ENCODE measurements at regions of chr2 and their contacts with region 1.

Region 1: GRCh38 chr2:73071360-73072133 is at the start of gene SFXN5:
- DNase-seq: peak; percentile 97
- ATAC-seq: peak; percentile 96
- H3K4me3 Mint-ChIP-seq: peak within 1 kb of the TSS; percentile 82
- H3K27ac Mint-ChIP-seq: peak within 1 kb of the TSS; percentile 90
- H3K4me1 Mint-ChIP-seq: peaks cover 17% of the 10 kb centered on the region
- H3K27me3 Mint-ChIP-seq: no peaks in the 10 kb centered on the region
- total RNA-seq, gene SFXN5: 4.5 to 6.2 TPM

Region 2: DNA sequence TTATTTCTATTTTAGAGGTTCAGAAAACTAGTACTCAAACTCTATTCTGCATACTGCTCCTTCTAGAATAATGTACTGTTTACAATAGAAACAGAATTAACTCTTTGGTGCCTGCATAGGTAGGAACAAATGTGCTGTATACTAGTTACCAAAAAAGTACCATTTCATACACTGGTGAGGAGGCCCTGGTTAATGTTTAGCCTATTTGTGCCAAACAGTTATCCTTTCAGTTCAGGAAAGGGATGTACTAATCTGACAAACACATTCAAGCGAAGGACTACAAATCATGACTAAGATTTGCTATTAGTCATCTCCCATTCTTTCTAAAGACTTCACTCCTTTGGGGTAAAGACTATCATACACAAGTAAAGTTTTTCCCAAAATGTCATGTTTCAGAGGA is 293.1 kb before region 1 on chr2:
- CTCF ChIA-PET with region 1: no interaction called
- POLR2A ChIA-PET with region 1: no interaction called
- intact Hi-C with region 1: loop called in 1 of 2 experiments (anchors 5 kb)
- DNase-seq: no peak
- ATAC-seq: peak; percentile 70
- H3K4me3 Mint-ChIP-seq: no peak overlapping the region
- H3K27ac Mint-ChIP-seq: no peak overlapping the region
- H3K4me1 Mint-ChIP-seq: peaks cover 3% of the 10 kb centered on the region
- H3K27me3 Mint-ChIP-seq: no peaks in the 10 kb centered on the region

Region 3: DNA sequence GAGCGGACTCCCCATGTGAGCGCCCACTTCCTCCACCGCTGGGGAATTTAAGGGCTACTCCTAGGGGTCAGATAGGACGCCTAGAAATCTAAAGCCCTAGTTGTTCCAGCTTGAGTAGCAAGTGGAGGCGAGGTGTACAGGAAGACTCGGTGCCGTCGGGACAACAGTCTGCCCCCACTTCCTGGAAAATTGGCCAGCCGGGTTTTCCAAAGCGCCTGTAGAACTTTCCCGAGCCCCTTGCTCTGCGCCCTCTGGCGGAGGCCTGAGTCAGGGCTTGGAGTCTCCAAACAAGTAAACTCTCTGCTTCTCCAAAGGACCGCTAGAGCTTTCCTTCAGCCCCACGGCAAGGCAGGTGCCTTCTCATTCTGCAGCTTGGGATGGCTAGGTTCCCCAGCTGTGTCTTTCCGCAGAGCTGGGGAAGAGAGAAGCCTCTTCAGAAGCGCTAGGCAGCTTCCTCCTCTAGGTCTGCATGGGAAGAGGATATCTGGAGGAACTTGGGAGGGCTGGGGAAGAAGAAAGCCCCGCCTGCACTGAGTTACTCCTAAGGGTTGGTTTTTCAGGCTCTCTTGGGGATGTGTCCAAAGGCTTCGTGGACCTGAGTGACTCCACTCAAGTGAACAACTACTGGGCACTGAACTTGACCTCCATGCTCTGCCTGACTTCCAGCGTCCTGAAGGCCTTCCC is 183.7 kb before region 1 on chr2:
- CTCF ChIA-PET with region 1: interaction called, 3 read pairs
- POLR2A ChIA-PET with region 1: no interaction called
- intact Hi-C with region 1: loop called (anchors 1 to 5 kb)
- DNase-seq: peak; percentile 78
- ATAC-seq: peak; percentile 51
- H3K4me3 Mint-ChIP-seq: peak overlapping the region; percentile 70
- H3K27ac Mint-ChIP-seq: no peak overlapping the region
- H3K4me1 Mint-ChIP-seq: peaks cover 10% of the 10 kb centered on the region
- H3K27me3 Mint-ChIP-seq: peaks cover 53% of the 10 kb centered on the region

Region 4: DNA sequence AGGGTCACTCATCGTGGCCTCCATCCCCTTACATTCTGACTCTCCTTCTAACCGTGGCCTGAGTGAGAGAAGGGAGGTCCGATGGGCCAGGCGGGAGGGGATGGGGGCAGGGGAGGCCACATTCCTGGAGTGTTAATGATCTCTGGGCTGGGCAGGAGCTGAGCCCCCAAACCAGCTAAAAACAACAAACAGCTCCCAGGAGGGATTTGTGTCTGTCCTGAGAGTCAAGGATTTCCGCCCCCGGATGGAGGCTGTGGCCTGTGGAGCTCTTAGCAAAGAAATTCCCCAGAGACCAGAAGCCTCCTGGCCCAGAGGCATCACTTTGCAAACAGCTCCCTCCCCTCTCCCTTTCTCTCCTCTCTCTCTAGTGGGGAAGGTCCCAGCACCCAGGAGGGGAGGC is 130.8 kb before region 1 on chr2:
- CTCF ChIA-PET with region 1: no interaction called
- POLR2A ChIA-PET with region 1: no interaction called
- intact Hi-C with region 1: no loop called
- DNase-seq: no peak
- ATAC-seq: no peak
- H3K4me3 Mint-ChIP-seq: no peak overlapping the region
- H3K27ac Mint-ChIP-seq: no peak overlapping the region
- H3K4me1 Mint-ChIP-seq: no peaks in the 10 kb centered on the region
- H3K27me3 Mint-ChIP-seq: no peaks in the 10 kb centered on the region

Region 5: GRCh38 chr2:73112913-73113633 is 41.5 kb after region 1 on chr2 and contains the start of gene RAB11FIP5:
- CTCF ChIA-PET with region 1: interaction called, 3 read pairs
- POLR2A ChIA-PET with region 1: no interaction called
- intact Hi-C with region 1: loop called in 1 of 2 experiments (anchors 1 kb)
- DNase-seq: peak; percentile 87
- ATAC-seq: peak; percentile 84
- H3K4me3 Mint-ChIP-seq: peak within 1 kb of the TSS; percentile 79
- H3K27ac Mint-ChIP-seq: peak within 1 kb of the TSS; percentile 40
- H3K4me1 Mint-ChIP-seq: peaks cover 23% of the 10 kb centered on the region
- H3K27me3 Mint-ChIP-seq: peaks cover 2% of the 10 kb centered on the region
- total RNA-seq, gene RAB11FIP5: 16.4 to 16.5 TPM

Region 6: GRCh38 chr2:73233154-73233931 is 161.8 kb after region 1 on chr2 and contains the start of gene PRADC1:
- CTCF ChIA-PET with region 1: no interaction called
- POLR2A ChIA-PET with region 1: no interaction called
- intact Hi-C with region 1: loop called (anchors 1 kb)
- DNase-seq: peak; percentile 96
- ATAC-seq: peak; percentile 89
- H3K4me3 Mint-ChIP-seq: peak within 1 kb of the TSS; percentile 92
- H3K27ac Mint-ChIP-seq: peak within 1 kb of the TSS; percentile 98
- H3K4me1 Mint-ChIP-seq: peaks cover 32% of the 10 kb centered on the region
- H3K27me3 Mint-ChIP-seq: no peaks in the 10 kb centered on the region
- total RNA-seq, gene PRADC1: 11.8 to 12.1 TPM

Measured in activated CD4-positive, alpha-beta T cell treated with anti-CD3 and anti-CD28 coated beads for 36 hours (primary cell).